HEK293 (cell line): ENCODE measurements at regions of chr6 and their contacts with region 1.

Region 1: DNA sequence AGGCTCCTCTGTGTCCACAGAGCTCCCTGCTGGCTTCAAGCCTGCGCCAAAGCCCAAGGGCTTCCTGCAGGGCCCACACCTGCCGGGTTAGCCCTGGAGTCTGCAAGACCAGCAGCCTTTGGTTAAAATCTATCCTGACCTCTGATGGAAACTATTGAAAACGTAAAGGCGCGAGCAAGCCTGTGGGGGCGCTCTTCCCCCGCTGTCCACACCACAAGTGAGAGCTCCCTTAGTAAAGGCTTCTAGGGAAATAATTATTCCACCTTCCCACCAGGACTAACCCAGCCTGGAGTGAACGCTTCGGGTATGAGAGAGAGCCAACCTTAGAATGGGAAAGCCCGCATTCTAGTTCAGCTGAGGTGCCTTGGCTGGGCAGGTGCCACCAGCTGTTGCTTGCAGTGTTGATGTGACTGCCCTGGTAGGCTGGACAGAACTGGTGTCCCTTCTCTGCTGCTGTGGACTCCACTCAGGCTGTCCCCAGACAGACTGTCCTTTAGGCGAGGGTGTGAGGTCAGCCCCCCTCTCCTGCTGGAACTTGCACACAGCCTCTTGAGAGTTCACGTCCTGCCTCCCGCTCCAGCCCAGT is 68.7 kb downstream of the SYTL3 start:
- H3K4me3 ChIP-seq: no peak overlapping the region
- H3K27ac ChIP-seq: no peak overlapping the region
- H3K4me1 ChIP-seq: no peaks in the 10 kb centered on the region
- CTCF ChIP-seq: no peak

Region 2: DNA sequence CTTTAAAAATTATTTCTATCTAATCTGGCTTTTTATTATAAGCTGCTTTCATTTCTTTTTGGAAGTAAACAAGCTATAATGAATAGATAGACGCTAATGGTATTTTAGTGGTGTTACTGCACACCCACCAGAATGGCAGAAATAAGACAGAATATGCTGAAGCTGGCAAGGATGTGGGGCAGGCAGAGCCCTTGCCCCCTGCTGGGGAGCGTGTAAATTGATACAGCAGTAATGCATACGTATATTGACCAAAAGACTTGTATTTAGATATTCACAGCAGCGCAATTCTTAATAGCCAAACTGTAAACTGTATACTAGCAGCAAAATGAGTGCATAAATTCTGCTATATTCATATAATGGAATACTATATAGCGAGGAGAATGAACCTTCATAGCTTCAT is 123.3 kb before region 1 on chr6:
- CTCF ChIA-PET with region 1: no interaction called
- POLR2A ChIA-PET with region 1: no interaction called
- H3K4me3 ChIP-seq: no peak overlapping the region
- H3K27ac ChIP-seq: no peak overlapping the region
- H3K4me1 ChIP-seq: no peaks in the 10 kb centered on the region
- CTCF ChIP-seq: no peak

Region 3: DNA sequence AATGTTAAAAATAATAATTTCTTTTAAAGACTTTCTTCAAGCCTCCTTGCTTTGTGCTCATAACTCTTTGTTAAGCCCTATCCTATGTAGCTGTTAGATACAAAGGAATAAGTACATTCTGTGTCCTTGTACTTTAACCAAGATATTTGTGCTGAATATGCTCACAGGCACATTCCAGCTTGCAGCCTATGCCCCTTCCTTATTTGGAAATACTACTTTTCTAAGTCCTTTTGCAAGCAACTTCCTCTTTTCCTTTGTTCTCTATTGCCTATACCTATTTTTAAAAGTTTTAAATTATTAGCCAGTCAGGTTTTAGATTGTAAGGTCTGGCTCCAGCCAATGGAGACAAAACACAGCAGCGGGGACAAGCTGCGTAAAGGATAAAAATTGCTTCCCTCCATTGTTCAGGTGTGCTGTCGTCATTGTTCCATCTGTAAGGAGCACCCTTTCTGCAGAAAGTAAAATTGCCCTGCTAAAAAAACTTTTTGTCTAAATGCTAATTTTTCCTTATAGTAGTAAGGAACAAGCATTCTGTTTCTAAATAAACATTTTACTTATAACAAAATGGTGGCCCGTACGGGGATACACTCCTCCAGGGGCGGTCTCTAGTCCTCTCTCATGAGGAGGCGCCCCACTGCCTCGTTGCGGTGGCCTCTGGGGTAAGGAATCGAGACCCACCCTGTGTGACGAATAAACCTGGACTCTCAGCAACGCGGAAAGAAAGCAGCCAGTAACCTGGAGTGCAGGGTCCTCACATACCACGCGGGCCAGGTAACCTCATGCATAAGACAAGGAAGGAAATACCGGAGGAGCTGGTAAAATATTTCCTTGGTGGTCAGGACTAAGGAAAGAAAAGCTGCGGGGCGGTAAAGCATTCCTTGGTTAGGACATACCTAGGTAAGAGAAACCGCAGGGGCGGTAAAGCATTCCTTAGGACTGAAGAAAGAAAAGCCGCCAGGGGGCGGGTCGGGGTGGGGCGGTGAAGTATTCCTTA is 11.7 kb after region 1 on chr6:
- CTCF ChIA-PET with region 1: interaction called, 34 read pairs
- POLR2A ChIA-PET with region 1: no interaction called
- H3K4me3 ChIP-seq: no peak overlapping the region
- H3K27ac ChIP-seq: no peak overlapping the region
- H3K4me1 ChIP-seq: no peaks in the 10 kb centered on the region
- CTCF ChIP-seq: no peak

Region 4: GRCh38 chr6:158752613-158753012 is 34.1 kb after region 1 on chr6:
- CTCF ChIA-PET with region 1: interaction called, 12 read pairs
- POLR2A ChIA-PET with region 1: no interaction called
- H3K4me3 ChIP-seq: no peak overlapping the region
- H3K27ac ChIP-seq: no peak overlapping the region
- H3K4me1 ChIP-seq: no peaks in the 10 kb centered on the region
- CTCF ChIP-seq: 0 out of 2 replicates have a peak, but pooled peaks have one; percentile 15

Region 5: DNA sequence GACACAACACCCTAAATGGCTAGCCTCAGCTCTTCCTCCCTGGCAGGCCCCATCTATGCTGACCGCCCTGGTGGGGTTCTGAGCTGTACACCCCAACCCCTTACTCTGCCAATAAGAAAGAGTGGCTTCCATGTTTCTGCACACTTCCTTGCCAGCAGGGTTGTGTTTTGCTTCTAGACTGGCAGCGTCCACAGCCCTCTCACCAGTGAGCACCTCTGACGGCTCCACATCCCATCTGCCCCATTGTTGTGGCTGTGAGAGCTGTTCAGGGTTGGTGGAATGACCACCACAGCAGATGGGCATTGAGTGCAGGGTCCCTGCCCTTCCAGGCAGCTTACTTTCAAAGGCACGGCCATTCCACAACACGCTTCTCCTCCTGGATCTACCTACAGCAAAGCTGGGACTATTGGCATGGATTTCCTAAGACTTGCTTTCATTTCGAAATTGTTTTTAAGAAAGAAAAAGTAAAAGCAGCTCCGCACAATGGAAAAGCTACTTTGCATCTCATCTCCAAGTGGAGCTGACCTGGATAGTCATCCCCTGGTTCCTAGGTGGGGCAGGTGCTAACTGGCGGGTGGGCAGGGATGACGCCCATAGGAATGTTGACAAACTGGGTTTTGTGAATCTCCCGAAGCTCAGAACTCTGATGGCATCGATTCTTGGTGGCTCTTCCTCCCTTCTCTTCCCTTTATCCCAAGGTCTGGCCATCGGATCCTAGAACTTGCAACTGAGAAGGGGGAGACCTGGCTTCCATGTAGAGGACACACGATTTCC is 112.8 kb after region 1 on chr6:
- CTCF ChIA-PET with region 1: interaction called, 10 read pairs
- POLR2A ChIA-PET with region 1: no interaction called
- H3K4me3 ChIP-seq: no peak overlapping the region
- H3K27ac ChIP-seq: no peak overlapping the region
- H3K4me1 ChIP-seq: no peaks in the 10 kb centered on the region
- CTCF ChIP-seq: no peak